ENCODE measurements at regions of chr1 and their contacts with region 1.

Region 1: DNA sequence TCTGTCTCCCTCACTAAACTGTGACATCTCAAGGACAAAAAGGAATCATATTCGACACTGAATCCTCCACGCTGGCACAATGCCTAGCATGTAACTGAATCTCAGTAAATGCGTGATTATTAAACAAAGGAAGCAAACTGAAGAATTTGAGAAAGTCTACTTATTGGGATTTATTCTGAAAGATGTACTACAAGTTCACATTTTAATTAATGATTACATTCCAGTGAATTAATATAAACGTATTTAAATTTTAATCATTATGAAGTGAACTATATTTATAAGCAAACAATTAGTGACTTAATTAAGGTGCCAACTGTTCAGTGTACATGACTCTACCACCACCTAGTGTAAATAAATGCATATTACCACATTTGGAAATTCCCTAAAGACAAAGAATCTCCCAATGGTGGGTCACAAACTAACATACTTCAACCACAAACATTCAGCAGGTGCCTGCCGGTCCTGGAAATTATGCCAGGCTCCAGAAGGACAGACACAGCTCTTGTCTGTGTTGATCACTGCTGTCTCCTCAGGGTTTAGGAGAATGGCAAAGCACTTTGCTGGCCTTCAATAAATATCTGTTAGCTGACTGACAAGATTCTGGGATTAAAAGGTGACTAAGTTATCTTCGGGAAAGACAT is 56.3 kb downstream of the SMYD3 start:
- DNase-seq: no peak
- ATAC-seq: no peak
- H3K4me3 Mint-ChIP-seq: no peak overlapping the region
- H3K27ac Mint-ChIP-seq: no peak overlapping the region
- H3K4me1 Mint-ChIP-seq: no peaks in the 10 kb centered on the region
- H3K27me3 Mint-ChIP-seq: no peaks in the 10 kb centered on the region
- CTCF ChIP-seq: no peak

Region 2: GRCh38 chr1:245888809-245889208 is 561.9 kb before region 1 on chr1:
- CTCF ChIA-PET with region 1: no interaction called
- POLR2A ChIA-PET with region 1: no interaction called
- intact Hi-C with region 1: loop called (anchors 2 kb)
- DNase-seq: no peak
- ATAC-seq: no peak
- H3K4me3 Mint-ChIP-seq: no peak overlapping the region
- H3K27ac Mint-ChIP-seq: no peak overlapping the region
- H3K4me1 Mint-ChIP-seq: no peaks in the 10 kb centered on the region
- H3K27me3 Mint-ChIP-seq: no peaks in the 10 kb centered on the region
- CTCF ChIP-seq: no peak

Region 3: DNA sequence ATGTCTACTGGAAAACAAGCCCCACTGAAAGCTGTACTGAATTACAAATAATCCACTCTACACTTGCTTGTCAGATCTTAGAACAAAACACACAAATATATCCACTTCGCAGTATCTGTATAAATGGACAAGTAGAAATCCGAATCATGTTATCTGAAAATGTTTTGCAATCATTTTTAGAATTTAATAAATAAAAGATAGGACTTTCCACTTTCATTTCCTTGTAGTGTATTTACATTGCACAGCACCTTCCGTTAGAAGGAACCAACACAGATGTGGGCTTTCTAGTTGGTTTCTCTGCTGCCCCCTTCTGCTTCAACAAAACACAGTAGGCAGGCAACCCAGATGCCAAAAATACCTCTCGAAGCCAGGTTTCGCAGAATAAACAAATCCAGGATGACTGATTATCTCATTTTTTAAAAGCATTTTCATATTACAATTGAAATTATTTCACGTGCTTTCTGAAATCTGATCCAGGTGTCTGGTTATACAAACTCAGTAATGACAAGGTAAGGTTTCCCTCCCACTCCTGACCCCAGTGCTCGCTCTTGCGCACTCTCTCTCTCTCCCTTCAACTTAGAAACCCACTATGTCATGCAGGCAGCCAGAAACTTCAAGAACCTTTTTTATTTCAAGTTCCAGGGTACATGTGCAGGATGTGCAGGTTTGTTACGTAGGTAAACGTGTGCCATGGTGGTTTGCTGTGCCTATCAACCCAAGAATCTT is 333.5 kb before region 1 on chr1:
- CTCF ChIA-PET with region 1: no interaction called
- POLR2A ChIA-PET with region 1: no interaction called
- intact Hi-C with region 1: loop called (anchors 10 kb)
- DNase-seq: no peak
- ATAC-seq: peak; percentile 89
- H3K4me3 Mint-ChIP-seq: peak overlapping the region; percentile 38
- H3K27ac Mint-ChIP-seq: peak overlapping the region; percentile 35
- H3K4me1 Mint-ChIP-seq: peaks cover 32% of the 10 kb centered on the region
- H3K27me3 Mint-ChIP-seq: no peaks in the 10 kb centered on the region
- CTCF ChIP-seq: no peak